GM12878 (cell line): ENCODE measurements at regions of chr16 and their contacts with region 1.

Region 1: DNA sequence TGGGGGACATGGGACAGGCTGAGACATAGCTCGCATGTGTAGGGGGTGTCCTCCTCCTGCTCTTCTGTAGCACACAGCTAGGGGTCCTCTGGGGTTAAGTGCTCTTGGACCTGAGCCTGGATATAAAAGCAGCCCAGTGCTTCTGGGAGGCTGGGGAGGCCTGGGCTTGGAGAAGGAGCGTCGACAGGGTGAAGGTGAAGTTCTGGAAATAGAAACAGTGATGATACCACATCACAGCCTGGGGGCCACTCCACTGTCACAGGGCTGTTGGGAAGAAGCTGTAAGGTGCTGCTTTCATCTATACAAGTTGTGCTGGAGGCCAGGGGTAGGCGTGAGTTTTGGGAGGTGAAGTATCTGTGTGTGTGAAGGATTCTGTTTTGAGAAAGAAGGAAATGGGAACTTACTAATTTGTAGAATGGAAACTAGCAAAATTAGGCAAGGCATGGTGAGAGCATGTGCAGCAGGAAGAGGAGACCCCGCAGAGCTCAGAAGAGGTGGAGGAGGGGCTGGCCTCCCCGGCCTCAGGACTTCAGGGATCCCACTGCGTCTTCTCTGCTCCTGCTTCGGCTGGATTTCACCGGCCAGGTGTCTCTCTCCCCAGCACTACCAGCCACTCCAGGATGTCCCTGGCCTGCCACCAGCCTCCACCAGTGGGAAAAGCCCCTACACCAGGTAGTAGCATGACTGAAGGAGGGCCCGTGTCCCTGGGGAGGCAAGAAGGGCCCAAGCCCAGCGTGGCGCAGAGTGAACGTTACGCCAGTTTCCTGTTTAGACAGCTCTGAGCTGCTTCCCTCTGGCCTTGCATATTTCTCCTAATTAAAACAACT is 19.4 kb downstream of the PLCG2 start:
- DNase-seq: peak; percentile 97
- ATAC-seq: peak; percentile 76
- H3K4me3 ChIP-seq: peak overlapping the region; percentile 62
- H3K27ac ChIP-seq: peak overlapping the region; percentile 98
- H3K4me1 ChIP-seq: peaks cover 52% of the 10 kb centered on the region
- H3K27me3 ChIP-seq: no peaks in the 10 kb centered on the region
- CTCF ChIP-seq: peak in 2 of 3 experiments; percentile 27 to 36; a peak in 4 of 6 replicates
- EP300 ChIP-seq: peak; percentile 80 to 84; a peak in 3 of 4 replicates
- POLR2A ChIP-seq: peak; percentile 50; the same call in 1 of the 2 replicates
- RAD21 ChIP-seq: no peak; the same call in 1 of the 2 replicates

Region 2: GRCh38 chr16:81623363-81624102 is 175.0 kb before region 1 on chr16:
- CTCF ChIA-PET with region 1: no interaction called
- POLR2A ChIA-PET with region 1: no interaction called
- RAD21 ChIA-PET with region 1: no interaction called
- SMC1A ChIA-PET with region 1: no interaction called
- in situ Hi-C with region 1: no loop called
- intact Hi-C with region 1: no loop called
- DNase-seq: peak; percentile 37
- ATAC-seq: peak; percentile 76
- H3K4me3 ChIP-seq: no peak overlapping the region
- H3K27ac ChIP-seq: no peak overlapping the region
- H3K4me1 ChIP-seq: peaks cover 10% of the 10 kb centered on the region
- H3K27me3 ChIP-seq: no peaks in the 10 kb centered on the region
- CTCF ChIP-seq: peak; percentile 62 to 84 (median 68); a peak in 5 of 6 replicates
- EP300 ChIP-seq: no peak
- POLR2A ChIP-seq: no peak
- RAD21 ChIP-seq: peak; percentile 87

Region 3: DNA sequence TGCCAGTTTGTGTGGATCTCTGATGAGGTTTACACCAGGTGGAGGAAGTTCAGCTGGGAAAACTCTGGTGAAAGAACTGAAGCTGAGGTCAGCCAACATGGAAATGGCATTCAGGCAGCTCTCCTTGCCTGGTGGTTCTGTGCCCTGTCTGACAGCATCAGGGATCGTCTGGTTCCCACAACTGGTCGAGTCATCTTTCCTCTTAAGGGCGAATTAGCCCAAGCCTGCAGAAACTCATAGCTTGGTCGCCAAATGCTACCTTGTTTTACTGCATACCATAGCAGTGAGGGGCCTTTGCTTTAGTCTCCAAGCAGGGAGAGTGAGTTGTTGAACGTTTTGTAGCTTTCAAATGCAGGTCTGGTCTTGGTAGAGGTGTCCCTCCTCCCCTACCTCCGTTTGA is 12.2 kb before region 1 on chr16:
- CTCF ChIA-PET with region 1: interaction called, 16 read pairs
- POLR2A ChIA-PET with region 1: interaction called, 22 read pairs
- RAD21 ChIA-PET with region 1: interaction called, 74 read pairs
- SMC1A ChIA-PET with region 1: interaction called, 17 read pairs
- in situ Hi-C with region 1: no loop called
- intact Hi-C with region 1: no loop called
- DNase-seq: no peak
- ATAC-seq: no peak
- H3K4me3 ChIP-seq: peak overlapping the region; percentile 75
- H3K27ac ChIP-seq: peak overlapping the region; percentile 60
- H3K4me1 ChIP-seq: peaks cover 42% of the 10 kb centered on the region
- H3K27me3 ChIP-seq: no peaks in the 10 kb centered on the region
- CTCF ChIP-seq: no peak
- EP300 ChIP-seq: no peak
- POLR2A ChIP-seq: no peak
- RAD21 ChIP-seq: no peak

Region 4: DNA sequence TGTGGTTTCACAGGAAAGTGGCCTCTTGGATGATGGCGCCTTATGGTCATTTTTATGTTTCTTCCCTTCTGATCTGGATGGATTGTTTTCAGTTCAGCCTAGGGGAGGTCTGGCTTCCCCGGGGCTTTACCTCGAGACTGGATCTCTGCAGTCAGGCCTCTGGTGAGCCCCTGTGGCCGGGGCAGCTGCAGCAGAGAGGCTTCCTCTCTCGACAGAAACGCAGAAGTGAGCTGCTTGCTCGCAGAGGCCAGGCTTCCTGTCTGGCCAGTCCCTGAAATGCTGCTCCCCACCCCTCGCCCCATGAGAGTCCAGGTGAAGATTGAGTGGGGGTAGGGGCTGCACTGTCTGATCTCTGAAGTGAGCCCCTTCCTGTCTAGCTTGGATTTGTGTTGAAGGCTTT is 24.6 kb after region 1 on chr16:
- CTCF ChIA-PET with region 1: interaction called, 18 read pairs
- POLR2A ChIA-PET with region 1: interaction called, 36 read pairs
- RAD21 ChIA-PET with region 1: interaction called, 62 read pairs
- SMC1A ChIA-PET with region 1: interaction called, 86 read pairs
- in situ Hi-C with region 1: no loop called
- intact Hi-C with region 1: no loop called
- DNase-seq: no peak
- ATAC-seq: peak; percentile 72
- H3K4me3 ChIP-seq: peak overlapping the region; percentile 71
- H3K27ac ChIP-seq: peak overlapping the region; percentile 98
- H3K4me1 ChIP-seq: peaks cover 86% of the 10 kb centered on the region
- H3K27me3 ChIP-seq: no peaks in the 10 kb centered on the region
- CTCF ChIP-seq: peak; percentile 4 to 42 (median 11); a peak in 2 of 6 replicates
- EP300 ChIP-seq: peak; percentile 23 to 60; a peak in 3 of 4 replicates
- POLR2A ChIP-seq: peak; percentile 80
- RAD21 ChIP-seq: peak; percentile 53

Region 5: GRCh38 chr16:81831722-81832126 is 33.2 kb after region 1 on chr16:
- CTCF ChIA-PET with region 1: interaction called, 6 read pairs
- POLR2A ChIA-PET with region 1: interaction called, 8 read pairs
- RAD21 ChIA-PET with region 1: interaction called, 14 read pairs
- SMC1A ChIA-PET with region 1: interaction called, 9 read pairs
- in situ Hi-C with region 1: no loop called
- intact Hi-C with region 1: no loop called
- DNase-seq: peak; percentile 82
- ATAC-seq: peak; percentile 91
- H3K4me3 ChIP-seq: peak overlapping the region; percentile 64
- H3K27ac ChIP-seq: peak overlapping the region; percentile 95
- H3K4me1 ChIP-seq: peaks cover 87% of the 10 kb centered on the region
- H3K27me3 ChIP-seq: no peaks in the 10 kb centered on the region
- CTCF ChIP-seq: peak; percentile 20 to 60 (median 55); a peak in 5 of 6 replicates
- EP300 ChIP-seq: 0 out of 4 replicates have a peak, but pooled peaks have one; percentile 25 to 56
- POLR2A ChIP-seq: peak; percentile 77
- RAD21 ChIP-seq: peak; percentile 42

Region 6: DNA sequence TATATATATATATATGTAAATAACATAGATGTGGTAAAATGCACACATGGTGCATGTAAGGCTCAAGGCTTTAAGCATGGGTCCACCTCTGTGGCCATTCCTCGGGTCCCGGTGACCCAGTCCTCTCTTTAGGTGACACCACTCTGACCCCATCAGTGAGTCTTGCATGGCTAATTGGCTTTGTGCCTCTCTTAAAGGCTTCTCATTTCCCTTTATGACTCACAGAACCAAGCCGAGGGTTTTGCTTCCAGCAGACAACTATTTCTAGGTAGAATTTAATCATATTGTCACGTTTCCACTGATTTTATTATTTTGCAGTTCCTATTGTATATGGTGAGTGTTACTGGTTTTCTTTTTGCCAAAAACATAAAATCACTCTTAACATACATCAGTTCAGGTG is 40.3 kb after region 1 on chr16:
- CTCF ChIA-PET with region 1: interaction called, 6 read pairs
- POLR2A ChIA-PET with region 1: interaction called, 7 read pairs
- RAD21 ChIA-PET with region 1: interaction called, 17 read pairs
- SMC1A ChIA-PET with region 1: interaction called, 18 read pairs
- in situ Hi-C with region 1: no loop called
- intact Hi-C with region 1: loop called (anchors 1 kb)
- DNase-seq: peak; percentile 57
- ATAC-seq: peak; percentile 64
- H3K4me3 ChIP-seq: no peak overlapping the region
- H3K27ac ChIP-seq: peak overlapping the region; percentile 54
- H3K4me1 ChIP-seq: peaks cover 87% of the 10 kb centered on the region
- H3K27me3 ChIP-seq: no peaks in the 10 kb centered on the region
- CTCF ChIP-seq: no peak
- EP300 ChIP-seq: peak; percentile 26 to 53; a peak in 2 of 4 replicates
- POLR2A ChIP-seq: peak; percentile 44; the same call in 1 of the 2 replicates
- RAD21 ChIP-seq: no peak

Region 7: DNA sequence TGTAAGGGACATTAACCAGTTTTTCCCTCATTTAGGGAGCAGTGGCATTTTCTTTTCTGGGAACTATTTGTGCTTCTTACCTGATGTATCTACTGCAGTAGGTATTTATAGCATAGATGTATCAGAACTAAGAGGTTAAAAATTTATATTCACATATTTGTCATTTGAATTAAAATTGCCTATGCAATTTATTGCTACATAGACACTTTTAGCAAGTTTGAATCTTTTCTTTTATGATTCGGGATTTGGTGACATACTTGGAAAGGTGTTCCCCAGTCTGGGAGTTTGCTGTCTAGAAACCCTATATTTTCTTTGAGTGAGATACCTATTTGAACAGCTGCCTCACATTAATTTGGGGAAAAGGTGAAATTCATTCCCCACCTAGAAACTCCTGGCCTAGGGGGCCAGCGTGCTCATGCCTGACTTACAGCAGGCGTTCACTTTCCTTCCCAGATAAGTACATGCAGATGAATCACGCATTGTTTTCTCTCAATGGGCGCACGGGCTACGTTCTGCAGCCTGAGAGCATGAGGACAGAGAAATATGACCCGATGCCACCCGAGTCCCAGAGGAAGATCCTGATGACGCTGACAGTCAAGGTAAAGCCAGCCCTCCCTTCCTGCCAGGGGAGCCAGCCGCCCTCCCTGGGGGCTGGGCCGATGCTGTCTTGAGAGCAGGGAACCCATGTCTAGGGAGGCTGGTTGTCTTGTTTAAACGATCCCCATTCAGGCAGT is 138.9 kb after region 1 on chr16:
- CTCF ChIA-PET with region 1: no interaction called
- POLR2A ChIA-PET with region 1: no interaction called
- RAD21 ChIA-PET with region 1: no interaction called
- SMC1A ChIA-PET with region 1: no interaction called
- in situ Hi-C with region 1: no loop called
- intact Hi-C with region 1: no loop called
- DNase-seq: no peak
- ATAC-seq: no peak
- H3K4me3 ChIP-seq: no peak overlapping the region
- H3K27ac ChIP-seq: no peak overlapping the region
- H3K4me1 ChIP-seq: no peaks in the 10 kb centered on the region
- H3K27me3 ChIP-seq: no peaks in the 10 kb centered on the region
- CTCF ChIP-seq: no peak
- EP300 ChIP-seq: no peak
- POLR2A ChIP-seq: no peak
- RAD21 ChIP-seq: no peak